AG04450 (cell line): ENCODE measurements at regions of chr2 and their contacts with region 1.

Region 1: GRCh38 chr2:85642725-85643124 is 25.3 kb downstream of the SFTPB start:
- DNase-seq: no peak
- H3K4me3 ChIP-seq: no peak overlapping the region
- H3K27ac ChIP-seq: no peak overlapping the region
- H3K27me3 ChIP-seq: no peaks in the 10 kb centered on the region
- CTCF ChIP-seq: no peak

Region 2: GRCh38 chr2:85409845-85410583 is 232.7 kb before region 1 on chr2 and contains the start of gene CAPG:
- CTCF ChIA-PET with region 1: no interaction called
- POLR2A ChIA-PET with region 1: no interaction called
- DNase-seq: no peak
- H3K4me3 ChIP-seq: no peak within 1 kb of the TSS
- H3K27ac ChIP-seq: no peak within 1 kb of the TSS
- H3K27me3 ChIP-seq: no peaks in the 10 kb centered on the region
- CTCF ChIP-seq: no peak
- polyA plus RNA-seq, gene CAPG: 70.5 and 97.8 TPM in 2 replicates

Region 3: DNA sequence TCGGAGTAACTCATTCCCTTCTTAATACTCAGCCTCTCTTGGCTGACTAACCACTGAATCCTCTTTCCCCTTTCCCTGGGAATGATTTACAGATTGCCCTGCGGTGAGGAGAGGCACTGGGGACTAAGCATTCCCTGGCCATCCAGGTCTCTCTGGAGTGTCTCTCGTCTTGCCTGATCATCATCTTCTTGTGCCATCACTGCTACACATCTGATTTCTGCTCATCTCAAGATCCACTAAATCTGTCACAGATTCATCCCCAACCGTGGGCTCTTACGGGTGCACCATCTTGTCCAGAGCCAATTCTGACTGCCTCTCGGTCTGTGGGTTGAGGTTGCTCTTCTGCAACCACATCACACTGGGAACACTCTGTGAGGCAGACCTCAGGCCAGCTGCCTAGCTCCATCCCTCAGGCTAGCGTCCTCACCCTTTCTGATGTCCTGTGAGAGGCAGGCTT is 13.3 kb after region 1 on chr2:
- CTCF ChIA-PET with region 1: interaction called, 31 read pairs
- POLR2A ChIA-PET with region 1: no interaction called
- DNase-seq: no peak
- H3K4me3 ChIP-seq: no peak overlapping the region
- H3K27ac ChIP-seq: no peak overlapping the region
- H3K27me3 ChIP-seq: no peaks in the 10 kb centered on the region
- CTCF ChIP-seq: no peak

Region 4: DNA sequence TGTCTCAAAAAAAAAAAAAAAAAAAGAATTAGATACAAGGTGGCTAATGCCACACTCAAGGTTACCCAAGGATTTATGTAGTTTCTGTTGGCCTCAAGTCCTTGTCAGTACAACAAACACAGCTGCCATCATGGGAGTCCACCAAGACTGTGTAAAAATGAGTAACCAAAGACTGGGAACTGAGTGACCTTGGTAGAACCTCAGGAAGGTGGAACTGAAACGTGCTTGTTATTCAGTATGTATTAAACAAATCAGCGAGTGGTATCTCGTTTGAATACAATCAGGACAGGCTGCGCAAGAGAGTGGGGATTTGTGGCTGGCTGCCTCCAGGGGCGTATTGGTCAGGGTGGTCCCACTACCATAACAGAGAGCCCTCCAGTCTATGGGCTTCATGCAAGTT is 26.8 kb after region 1 on chr2:
- CTCF ChIA-PET with region 1: interaction called, 11 read pairs
- POLR2A ChIA-PET with region 1: no interaction called
- DNase-seq: no peak
- H3K4me3 ChIP-seq: no peak overlapping the region
- H3K27ac ChIP-seq: no peak overlapping the region
- H3K27me3 ChIP-seq: peaks cover 6% of the 10 kb centered on the region
- CTCF ChIP-seq: no peak

Region 5: GRCh38 chr2:85707304-85707703 is 64.6 kb after region 1 on chr2:
- CTCF ChIA-PET with region 1: interaction called, 165 read pairs
- POLR2A ChIA-PET with region 1: interaction called, 3 read pairs
- DNase-seq: peak; percentile 87
- H3K4me3 ChIP-seq: no peak overlapping the region
- H3K27ac ChIP-seq: no peak overlapping the region
- H3K27me3 ChIP-seq: no peaks in the 10 kb centered on the region
- CTCF ChIP-seq: peak; percentile 89

Region 6: GRCh38 chr2:85712849-85713602 is 70.3 kb after region 1 on chr2:
- CTCF ChIA-PET with region 1: interaction called, 165 read pairs
- POLR2A ChIA-PET with region 1: interaction called, 3 read pairs
- DNase-seq: no peak
- H3K4me3 ChIP-seq: no peak overlapping the region
- H3K27ac ChIP-seq: no peak overlapping the region
- H3K27me3 ChIP-seq: peaks cover 5% of the 10 kb centered on the region
- CTCF ChIP-seq: no peak

Region 7: GRCh38 chr2:85723707-85724360 is 81.1 kb after region 1 on chr2:
- CTCF ChIA-PET with region 1: interaction called, 26 read pairs
- POLR2A ChIA-PET with region 1: no interaction called
- DNase-seq: no peak
- H3K4me3 ChIP-seq: no peak overlapping the region
- H3K27ac ChIP-seq: no peak overlapping the region
- H3K27me3 ChIP-seq: peaks cover 21% of the 10 kb centered on the region
- CTCF ChIP-seq: no peak

Region 8: DNA sequence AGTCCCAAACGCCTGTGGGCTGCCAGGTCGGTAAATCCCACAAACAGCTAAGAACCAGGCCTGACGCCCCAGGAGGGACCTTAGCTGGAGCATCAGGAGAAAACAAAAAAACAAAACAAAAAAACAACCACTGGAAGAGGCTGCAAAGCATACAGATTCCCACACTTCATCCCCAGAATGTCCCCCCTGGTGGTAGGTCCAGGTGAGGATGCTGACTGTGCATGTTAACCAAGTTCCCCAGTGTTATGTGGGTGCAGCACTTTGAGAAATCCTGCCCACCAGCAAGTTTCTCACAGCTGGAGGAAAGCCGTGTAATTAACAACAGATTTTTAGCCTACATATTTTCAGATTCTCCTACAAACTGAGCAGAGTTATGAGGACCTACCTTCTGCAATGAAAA is 231.0 kb after region 1 on chr2:
- CTCF ChIA-PET with region 1: no interaction called
- POLR2A ChIA-PET with region 1: no interaction called
- DNase-seq: no peak
- H3K4me3 ChIP-seq: no peak overlapping the region
- H3K27ac ChIP-seq: no peak overlapping the region
- H3K27me3 ChIP-seq: no peaks in the 10 kb centered on the region
- CTCF ChIP-seq: peak; percentile 28; the same call in 1 of the 2 replicates

Region 9: DNA sequence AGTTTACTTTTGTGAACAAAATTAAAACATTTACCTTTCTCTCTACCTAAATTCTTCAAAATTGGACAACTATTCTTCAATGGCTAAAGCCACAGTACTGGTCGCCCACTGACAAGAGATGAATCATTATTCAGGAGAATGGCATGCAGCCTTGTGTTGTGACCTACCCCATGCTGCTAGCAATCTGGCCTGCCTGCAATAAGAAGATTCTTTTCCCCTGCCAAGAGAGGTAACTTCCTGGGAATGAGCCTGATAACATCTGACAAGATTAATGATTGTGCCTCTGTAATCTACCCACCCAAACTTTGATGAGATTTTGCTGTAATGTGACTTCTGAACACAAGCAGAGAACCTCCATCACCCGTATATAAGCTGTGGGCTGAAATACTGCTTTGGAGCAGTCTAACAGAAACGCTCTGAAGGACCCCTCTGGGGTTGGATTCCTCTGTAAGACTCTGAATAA is 293.1 kb after region 1 on chr2:
- CTCF ChIA-PET with region 1: no interaction called
- POLR2A ChIA-PET with region 1: no interaction called
- DNase-seq: no peak
- H3K4me3 ChIP-seq: no peak overlapping the region
- H3K27ac ChIP-seq: no peak overlapping the region
- H3K27me3 ChIP-seq: no peaks in the 10 kb centered on the region
- CTCF ChIP-seq: no peak

Region 10: GRCh38 chr2:86249579-86250391 is 607.1 kb after region 1 on chr2:
- CTCF ChIA-PET with region 1: no interaction called
- POLR2A ChIA-PET with region 1: no interaction called
- DNase-seq: peak; percentile 57
- H3K4me3 ChIP-seq: no peak overlapping the region
- H3K27ac ChIP-seq: peak overlapping the region; percentile 42
- H3K27me3 ChIP-seq: peaks cover 21% of the 10 kb centered on the region
- CTCF ChIP-seq: no peak